ENCODE measurements at regions of chr10 and their contacts with region 1.

Region 1: GRCh38 chr10:21584834-21585530 is 51.0 kb downstream of the MLLT10 start:
- DNase-seq: no peak
- H3K4me3 Mint-ChIP-seq: peak overlapping the region; percentile 16
- H3K27ac Mint-ChIP-seq: no peak overlapping the region
- H3K4me1 Mint-ChIP-seq: peaks cover 52% of the 10 kb centered on the region
- H3K27me3 Mint-ChIP-seq: no peaks in the 10 kb centered on the region

Region 2: GRCh38 chr10:21533467-21534279 is 51.3 kb before region 1 on chr10 and contains the start of gene MLLT10:
- CTCF ChIA-PET with region 1: no interaction called
- POLR2A ChIA-PET with region 1: no interaction called
- intact Hi-C with region 1: loop called (anchors 1 kb)
- DNase-seq: peak; percentile 94
- H3K4me3 Mint-ChIP-seq: peak within 1 kb of the TSS; percentile 87
- H3K27ac Mint-ChIP-seq: peak within 1 kb of the TSS; percentile 96
- H3K4me1 Mint-ChIP-seq: peaks cover 27% of the 10 kb centered on the region
- H3K27me3 Mint-ChIP-seq: no peaks in the 10 kb centered on the region
- total RNA-seq, gene MLLT10: 32.8 to 35.4 TPM

Region 3: GRCh38 chr10:21614000-21614399 is 29.0 kb after region 1 on chr10:
- CTCF ChIA-PET with region 1: no interaction called
- POLR2A ChIA-PET with region 1: no interaction called
- intact Hi-C with region 1: loop called (anchors 1 kb)
- DNase-seq: no peak
- H3K4me3 Mint-ChIP-seq: no peak overlapping the region
- H3K27ac Mint-ChIP-seq: peak overlapping the region; percentile 40
- H3K4me1 Mint-ChIP-seq: peaks cover 30% of the 10 kb centered on the region
- H3K27me3 Mint-ChIP-seq: no peaks in the 10 kb centered on the region

Region 4: DNA sequence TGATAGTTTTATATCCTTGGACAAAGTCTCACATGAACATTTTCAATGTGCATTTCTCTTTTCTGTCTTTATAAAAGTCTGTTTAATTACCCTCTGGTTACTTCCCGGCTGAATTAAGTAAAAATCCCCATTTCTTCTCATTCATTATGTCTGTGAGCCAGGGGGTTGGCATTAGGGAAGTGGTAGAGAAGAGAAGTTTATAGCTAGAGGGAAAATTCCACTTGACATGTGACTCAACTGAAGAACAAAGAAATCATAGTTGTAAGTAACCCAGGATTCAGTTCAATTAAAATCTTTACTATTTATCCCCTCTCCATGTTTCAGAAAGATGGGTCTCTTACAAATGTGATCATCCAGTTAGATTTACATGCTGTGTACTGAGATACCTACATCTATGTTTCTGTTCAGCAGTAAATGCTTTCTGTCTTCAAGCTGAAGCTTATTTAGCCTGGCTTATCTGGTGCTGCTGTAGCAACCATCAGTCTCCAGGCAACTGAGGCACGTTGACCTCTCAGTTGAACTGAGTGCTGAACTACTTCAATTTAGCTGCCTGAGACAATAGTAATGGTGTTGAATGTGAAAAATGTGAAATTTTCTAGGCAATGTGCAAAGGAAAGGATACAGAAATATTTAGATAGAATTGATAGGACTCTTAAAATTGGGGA is 130.7 kb after region 1 on chr10:
- CTCF ChIA-PET with region 1: no interaction called
- POLR2A ChIA-PET with region 1: no interaction called
- intact Hi-C with region 1: loop called (anchors 1 kb)
- DNase-seq: no peak
- H3K4me3 Mint-ChIP-seq: no peak overlapping the region
- H3K27ac Mint-ChIP-seq: no peak overlapping the region
- H3K4me1 Mint-ChIP-seq: peaks cover 15% of the 10 kb centered on the region
- H3K27me3 Mint-ChIP-seq: no peaks in the 10 kb centered on the region

Measured in activated CD4-positive, alpha-beta memory T cell treated with anti-CD3 and anti-CD28 coated beads for 36 hours (primary cell).